PC-3 (cell line): ENCODE measurements at regions of chr10 and their contacts with region 1.

Region 1: DNA sequence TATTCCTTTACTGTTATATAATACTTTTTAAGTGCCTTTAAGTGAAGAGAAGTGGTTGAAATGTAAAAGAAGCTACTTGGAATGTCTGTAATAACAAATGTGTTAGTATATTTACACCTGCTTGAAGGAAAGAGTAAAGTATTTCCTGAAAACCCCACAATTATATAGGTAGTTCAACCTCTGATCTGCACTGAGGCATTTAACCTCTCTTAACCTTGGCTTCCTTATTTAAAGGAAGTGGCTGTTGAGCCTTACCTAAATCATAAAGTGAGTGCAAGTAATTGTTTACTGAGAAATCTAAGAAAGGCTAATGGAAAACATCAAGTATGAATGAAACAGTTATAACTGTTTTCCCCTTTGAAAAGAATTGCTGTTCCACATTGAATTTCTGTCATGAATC is 294.5 kb downstream of the ADK start:
- DNase-seq: no peak
- ATAC-seq: peak; percentile 51
- H3K4me3 ChIP-seq: no peak overlapping the region
- H3K27ac ChIP-seq: no peak overlapping the region
- H3K4me1 ChIP-seq: no peaks in the 10 kb centered on the region
- H3K27me3 ChIP-seq: no peaks in the 10 kb centered on the region
- CTCF ChIP-seq: no peak

Region 2: DNA sequence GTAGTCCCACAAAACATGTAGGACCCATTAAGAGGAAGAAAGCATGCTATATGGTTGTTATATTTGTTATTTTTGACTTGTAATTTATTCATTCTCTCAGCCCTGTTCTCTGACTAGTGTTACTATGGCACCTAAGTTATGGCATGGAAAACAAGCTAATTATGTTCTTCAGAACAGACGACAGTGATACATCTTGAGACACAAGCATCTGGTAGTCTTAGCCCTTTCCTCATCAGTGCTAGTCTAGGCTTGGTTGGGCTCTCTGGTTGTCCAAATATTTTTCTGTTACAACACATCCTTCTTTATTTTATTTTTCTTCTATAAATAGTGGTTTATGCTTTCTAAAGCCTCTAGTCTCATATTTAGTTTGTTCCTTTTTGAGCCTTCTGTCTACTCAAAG is 72.6 kb after region 1 on chr10:
- CTCF ChIA-PET with region 1: no interaction called
- POLR2A ChIA-PET with region 1: no interaction called
- intact Hi-C with region 1: no loop called
- DNase-seq: no peak
- ATAC-seq: peak; percentile 24; the same call in 1 of the 2 replicates
- H3K4me3 ChIP-seq: no peak overlapping the region
- H3K27ac ChIP-seq: no peak overlapping the region
- H3K4me1 ChIP-seq: no peaks in the 10 kb centered on the region
- H3K27me3 ChIP-seq: no peaks in the 10 kb centered on the region
- CTCF ChIP-seq: no peak

Region 3: GRCh38 chr10:75111367-75111906 is 665.9 kb after region 1 on chr10 and contains the start of gene SAMD8:
- CTCF ChIA-PET with region 1: no interaction called
- POLR2A ChIA-PET with region 1: no interaction called
- intact Hi-C with region 1: loop called (anchors 2 kb)
- DNase-seq: peak; percentile 100
- ATAC-seq: peak; percentile 84
- H3K4me3 ChIP-seq: peak within 1 kb of the TSS; percentile 74
- H3K27ac ChIP-seq: peak within 1 kb of the TSS; percentile 64
- H3K4me1 ChIP-seq: peaks cover 25% of the 10 kb centered on the region
- H3K27me3 ChIP-seq: no peaks in the 10 kb centered on the region
- CTCF ChIP-seq: peak; percentile 50
- total RNA-seq, gene SAMD8: 47.4 and 48.6 TPM in 2 replicates